WTC11 (cell line): ENCODE measurements at regions of chr19 and their contacts with region 1.

Region 1: GRCh38 chr19:28324275-28325060 is 888.5 kb downstream of the UQCRFS1 start:
- DNase-seq: no peak
- ATAC-seq: peak; percentile 78
- H3K4me3 Mint-ChIP-seq: no peak overlapping the region
- H3K27ac Mint-ChIP-seq: no peak overlapping the region
- H3K4me1 Mint-ChIP-seq: peaks cover 33% of the 10 kb centered on the region
- H3K27me3 Mint-ChIP-seq: peaks cover 8% of the 10 kb centered on the region
- CTCF ChIP-seq: no peak

Region 2: GRCh38 chr19:27974082-27974513 is 350.4 kb before region 1 on chr19:
- CTCF ChIA-PET with region 1: interaction called, 22 read pairs
- POLR2A ChIA-PET with region 1: no interaction called
- DNase-seq: peak; percentile 52
- ATAC-seq: peak; percentile 78
- H3K4me3 Mint-ChIP-seq: no peak overlapping the region
- H3K27ac Mint-ChIP-seq: no peak overlapping the region
- H3K4me1 Mint-ChIP-seq: peaks cover 4% of the 10 kb centered on the region; the same call in 1 of the 2 replicates
- H3K27me3 Mint-ChIP-seq: no peaks in the 10 kb centered on the region; the same call in 1 of the 2 replicates
- CTCF ChIP-seq: peak; percentile 53; the same call in 1 of the 2 replicates

Region 3: DNA sequence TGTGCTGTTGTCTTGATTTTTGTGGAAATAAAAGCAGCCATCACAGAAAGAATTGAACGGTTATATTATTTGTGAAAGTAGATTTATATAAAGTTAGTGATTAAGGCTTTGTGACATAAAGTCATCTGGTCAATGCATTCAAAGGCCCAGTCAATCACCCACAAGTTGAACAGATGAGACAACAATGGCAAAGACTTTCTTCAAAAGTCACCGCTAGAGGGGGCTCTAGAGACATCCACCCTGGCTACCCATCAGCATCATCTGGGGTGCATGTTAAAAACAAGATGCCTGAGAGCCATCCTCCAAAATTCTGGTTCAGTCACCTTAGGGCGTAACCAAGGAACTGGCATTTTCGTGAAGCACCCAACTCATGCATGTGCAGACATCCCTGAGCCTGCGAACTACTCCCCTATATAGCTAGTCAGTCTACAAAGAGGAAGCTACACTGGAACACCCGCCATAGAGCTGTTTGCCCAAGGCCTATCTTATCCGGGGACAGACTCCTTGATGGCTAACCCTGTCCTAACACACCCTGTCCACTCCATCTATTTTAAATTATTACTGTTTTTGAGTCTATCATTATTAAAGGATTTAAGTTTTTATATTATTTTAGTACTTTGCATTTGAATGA is 82.1 kb before region 1 on chr19:
- CTCF ChIA-PET with region 1: interaction called, 56 read pairs
- POLR2A ChIA-PET with region 1: no interaction called
- DNase-seq: peak; percentile 51
- ATAC-seq: peak; percentile 63
- H3K4me3 Mint-ChIP-seq: no peak overlapping the region
- H3K27ac Mint-ChIP-seq: no peak overlapping the region
- H3K4me1 Mint-ChIP-seq: peaks cover 14% of the 10 kb centered on the region
- H3K27me3 Mint-ChIP-seq: no peaks in the 10 kb centered on the region
- CTCF ChIP-seq: peak; percentile 72